Activated CD4-positive, alpha-beta T cell treated with anti-CD3 and anti-CD28 coated beads, Interleukin-2, amount 10 ng/mL, durations not matched to agents 7 days and 5 days (primary cell): ENCODE measurements at regions of chr11 and their contacts with region 1.

Region 1: DNA sequence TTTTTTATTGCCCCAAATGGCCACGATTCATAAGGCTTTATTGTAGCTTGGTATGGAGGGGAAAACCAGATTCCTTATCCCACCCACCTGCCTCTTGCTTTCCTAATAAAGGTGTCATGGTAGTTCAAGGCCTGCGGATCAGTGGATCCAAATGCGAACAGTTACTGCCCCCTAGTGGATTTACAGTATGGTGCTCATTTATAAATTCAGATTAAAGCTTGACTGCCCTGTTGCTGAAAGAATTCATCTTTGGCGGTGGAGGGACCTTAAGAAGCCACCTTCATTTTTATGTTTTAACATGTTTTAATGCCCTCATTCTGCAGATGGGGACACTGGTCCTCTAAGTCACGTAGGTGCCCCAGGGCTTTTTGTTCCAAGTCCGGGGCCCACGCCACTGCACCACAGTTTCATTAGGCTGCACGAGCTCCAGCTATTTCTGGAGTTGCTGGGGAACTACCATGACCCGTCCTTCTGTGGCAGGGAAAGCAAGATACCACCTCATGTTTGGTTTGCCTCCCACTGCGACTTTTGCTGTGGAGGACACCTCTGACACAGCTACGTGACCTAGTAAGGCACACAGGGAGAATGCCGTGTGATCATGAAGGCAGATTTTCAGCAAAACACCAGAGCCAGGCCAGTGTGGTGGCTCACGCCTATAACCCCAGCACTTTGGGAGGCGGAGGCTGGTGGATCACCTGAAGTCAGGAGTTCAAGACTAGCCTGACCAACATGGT is 15.6 kb upstream of the INCENP start:
- DNase-seq: peak; percentile 66
- H3K4me3 Mint-ChIP-seq: no peak overlapping the region
- H3K27ac Mint-ChIP-seq: peak overlapping the region; percentile 5
- H3K4me1 Mint-ChIP-seq: peaks cover 20% of the 10 kb centered on the region
- H3K27me3 Mint-ChIP-seq: peaks cover 5% of the 10 kb centered on the region

Region 2: GRCh38 chr11:61752117-61752924 is 355.9 kb before region 1 on chr11 and contains the start of gene MYRF:
- CTCF ChIA-PET with region 1: no interaction called
- POLR2A ChIA-PET with region 1: no interaction called
- DNase-seq: peak; percentile 54
- H3K4me3 Mint-ChIP-seq: peak within 1 kb of the TSS; percentile 45
- H3K27ac Mint-ChIP-seq: no peak within 1 kb of the TSS
- H3K4me1 Mint-ChIP-seq: peaks cover 25% of the 10 kb centered on the region
- H3K27me3 Mint-ChIP-seq: peaks cover 28% of the 10 kb centered on the region
- total RNA-seq, gene MYRF: 1.1 to 1.2 TPM

Region 3: GRCh38 chr11:61797263-61797944 is 310.8 kb before region 1 on chr11:
- CTCF ChIA-PET with region 1: interaction called, 14 read pairs
- POLR2A ChIA-PET with region 1: no interaction called
- DNase-seq: peak; percentile 86
- H3K4me3 Mint-ChIP-seq: no peak overlapping the region
- H3K27ac Mint-ChIP-seq: no peak overlapping the region
- H3K4me1 Mint-ChIP-seq: peaks cover 42% of the 10 kb centered on the region
- H3K27me3 Mint-ChIP-seq: no peaks in the 10 kb centered on the region

Region 4: GRCh38 chr11:61871158-61871597 is 237.0 kb before region 1 on chr11:
- CTCF ChIA-PET with region 1: interaction called, 13 read pairs
- POLR2A ChIA-PET with region 1: no interaction called
- DNase-seq: peak; percentile 63
- H3K4me3 Mint-ChIP-seq: peak overlapping the region; percentile 62
- H3K27ac Mint-ChIP-seq: no peak overlapping the region
- H3K4me1 Mint-ChIP-seq: peaks cover 5% of the 10 kb centered on the region
- H3K27me3 Mint-ChIP-seq: peaks cover 2% of the 10 kb centered on the region

Region 5: GRCh38 chr11:61899146-61899841 is 208.9 kb before region 1 on chr11:
- CTCF ChIA-PET with region 1: interaction called, 46 read pairs
- POLR2A ChIA-PET with region 1: no interaction called
- DNase-seq: peak; percentile 92
- H3K4me3 Mint-ChIP-seq: no peak overlapping the region
- H3K27ac Mint-ChIP-seq: peak overlapping the region; percentile 43
- H3K4me1 Mint-ChIP-seq: peaks cover 6% of the 10 kb centered on the region
- H3K27me3 Mint-ChIP-seq: no peaks in the 10 kb centered on the region

Region 6: GRCh38 chr11:61947486-61948210 is 160.5 kb before region 1 on chr11:
- CTCF ChIA-PET with region 1: interaction called, 19 read pairs
- POLR2A ChIA-PET with region 1: no interaction called
- DNase-seq: peak; percentile 75
- H3K4me3 Mint-ChIP-seq: no peak overlapping the region
- H3K27ac Mint-ChIP-seq: no peak overlapping the region
- H3K4me1 Mint-ChIP-seq: no peaks in the 10 kb centered on the region
- H3K27me3 Mint-ChIP-seq: peaks cover 6% of the 10 kb centered on the region

Region 7: DNA sequence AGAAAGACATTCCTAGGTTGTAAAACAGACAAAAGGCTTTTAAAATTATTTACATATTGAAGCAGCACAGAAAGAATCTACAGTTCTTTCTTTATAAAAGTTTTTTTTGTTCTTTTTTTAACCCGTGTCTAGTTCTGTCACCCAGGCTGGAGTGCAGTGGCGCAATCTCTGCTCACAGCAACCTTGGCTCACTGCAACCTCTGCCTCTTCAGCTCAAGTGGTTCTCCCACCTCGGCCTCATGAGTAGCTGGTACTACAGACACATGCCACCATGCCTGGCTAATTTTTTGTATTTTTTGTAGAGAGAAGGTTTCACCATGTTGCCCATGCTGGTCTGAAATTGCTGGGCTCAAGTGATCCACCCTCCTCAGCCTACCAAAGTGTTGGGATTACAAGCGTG is 11.8 kb after region 1 on chr11:
- CTCF ChIA-PET with region 1: interaction called, 18 read pairs
- POLR2A ChIA-PET with region 1: no interaction called
- DNase-seq: no peak
- H3K4me3 Mint-ChIP-seq: no peak overlapping the region
- H3K27ac Mint-ChIP-seq: no peak overlapping the region
- H3K4me1 Mint-ChIP-seq: peaks cover 12% of the 10 kb centered on the region
- H3K27me3 Mint-ChIP-seq: peaks cover 9% of the 10 kb centered on the region